Vagina (tissue), 2 donors: ENCODE measurements at regions of chr11 and their contacts with region 1.

Region 1: DNA sequence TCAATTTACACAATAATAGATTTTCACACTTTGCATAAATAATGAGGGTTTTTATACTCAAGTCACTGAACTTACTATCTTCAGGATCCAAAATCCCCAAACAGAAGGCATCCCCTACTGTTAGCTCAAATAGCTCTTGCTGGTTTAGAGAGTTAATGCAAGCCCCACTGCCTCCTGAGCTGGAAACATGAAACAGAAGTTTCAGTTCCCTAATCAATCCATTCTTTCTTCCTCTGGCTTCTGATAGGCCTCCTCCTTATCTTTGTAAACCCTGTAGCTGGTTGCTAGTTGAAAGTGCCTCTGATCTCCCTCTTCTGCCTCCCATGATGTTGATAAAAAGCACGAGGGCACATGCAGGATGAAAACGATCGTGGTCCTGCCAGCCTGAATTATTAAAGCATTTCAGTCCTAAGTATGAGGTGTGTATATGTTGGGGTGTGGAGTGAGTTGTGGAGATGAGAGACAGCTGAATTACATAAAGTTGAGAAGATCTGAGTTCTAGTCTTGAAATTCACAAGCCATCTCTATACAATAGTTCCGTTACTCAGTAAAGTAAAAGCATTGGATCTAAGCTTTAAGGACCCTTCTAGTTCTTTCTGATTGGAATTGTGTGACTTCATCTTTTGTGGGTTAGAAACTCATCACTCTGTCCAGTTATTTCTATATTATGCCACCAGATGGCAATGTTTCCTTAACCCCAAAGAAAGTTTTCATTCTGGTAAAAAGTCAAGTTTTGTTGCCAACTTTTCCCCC is 35.0 kb upstream of the EHF start:
- DNase-seq: no peak
- H3K4me3 ChIP-seq: no peak overlapping the region
- H3K27ac ChIP-seq: peak overlapping the region; percentile 11
- H3K4me1 ChIP-seq: peaks cover 11% of the 10 kb centered on the region
- H3K27me3 ChIP-seq: no peaks in the 10 kb centered on the region
- CTCF ChIP-seq: peak in 2 of 3 experiments; percentile 23 to 57
- POLR2A ChIP-seq: no peak

Region 2: GRCh38 chr11:34890812-34891211 is 304.9 kb after region 1 on chr11:
- intact Hi-C with region 1: loop called (anchors 10 kb)
- DNase-seq: no peak
- H3K4me3 ChIP-seq: no peak overlapping the region
- H3K27ac ChIP-seq: no peak overlapping the region
- H3K4me1 ChIP-seq: no peaks in the 10 kb centered on the region
- H3K27me3 ChIP-seq: no peaks in the 10 kb centered on the region
- CTCF ChIP-seq: peak; percentile 4 to 39 (median 20)
- POLR2A ChIP-seq: no peak

Region 3: GRCh38 chr11:35404388-35404775 is 818.5 kb after region 1 on chr11:
- intact Hi-C with region 1: loop called (anchors 10 kb)
- DNase-seq: peak in 1 of 2 donors; percentile 74
- H3K4me3 ChIP-seq: no peak overlapping the region
- H3K27ac ChIP-seq: no peak overlapping the region
- H3K4me1 ChIP-seq: no peaks in the 10 kb centered on the region
- H3K27me3 ChIP-seq: no peaks in the 10 kb centered on the region
- CTCF ChIP-seq: no peak
- POLR2A ChIP-seq: no peak